Mammary epithelial cell (primary cell): ENCODE measurements at regions of chr1 and their contacts with region 1.

Region 1: GRCh38 chr1:37807555-37808368 is at the starts of genes C1orf122 and YRDC:
- DNase-seq: peak; percentile 90
- H3K4me3 ChIP-seq: peak within 1 kb of the TSS; percentile 69 to 77 (median 70)
- H3K27ac ChIP-seq: peak within 1 kb of the TSS; percentile 60
- H3K4me1 ChIP-seq: peaks cover 16% of the 10 kb centered on the region
- H3K27me3 ChIP-seq: no peaks in the 10 kb centered on the region
- CTCF ChIP-seq: no peak
- total RNA-seq, gene C1orf122: 13.0 to 73.6 TPM
- total RNA-seq, gene YRDC: 18.0 to 27.7 TPM

Region 2: DNA sequence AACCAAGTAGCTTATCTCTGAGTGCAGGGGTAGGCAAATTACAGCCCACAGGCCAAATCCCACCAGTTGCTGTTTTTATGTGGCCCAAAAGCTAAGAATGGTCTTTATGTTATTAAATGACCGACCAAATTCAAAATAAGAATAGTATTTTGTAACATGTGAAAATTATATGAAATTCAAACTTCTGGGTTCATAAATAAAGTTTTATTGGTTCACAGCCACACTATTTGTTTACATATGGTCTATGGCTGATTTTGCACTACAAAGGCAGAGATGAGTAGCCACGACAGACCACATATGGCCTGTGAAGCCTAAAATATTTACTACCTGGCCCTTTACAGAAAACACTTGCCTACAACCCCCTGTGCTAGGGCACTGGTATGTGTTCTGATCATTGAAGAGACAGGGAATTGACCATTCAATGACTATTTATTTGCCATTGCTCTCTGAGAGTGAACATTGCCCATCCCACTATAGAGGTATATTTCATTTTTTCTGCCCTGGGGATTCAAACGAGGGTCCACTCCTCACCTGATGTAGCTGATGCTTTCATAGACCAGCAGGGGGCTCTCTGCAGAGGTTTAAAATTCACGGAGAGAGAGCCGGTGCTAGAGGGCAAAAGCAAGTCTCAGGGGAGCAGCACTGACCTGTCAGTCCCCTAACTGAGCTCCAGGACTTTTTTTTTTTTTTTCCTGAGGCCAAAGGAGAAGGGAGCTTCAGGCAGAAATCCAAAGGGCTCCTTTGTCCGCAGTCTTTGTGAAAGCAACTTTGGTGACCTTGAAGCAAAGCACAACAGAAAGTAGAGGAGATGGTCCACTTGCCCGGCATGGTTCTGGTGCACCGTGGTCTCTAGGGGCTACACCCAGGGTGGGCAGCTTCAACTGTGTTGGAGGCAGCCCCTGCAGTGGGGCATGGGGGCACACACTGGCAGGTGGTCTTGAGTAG is 204.7 kb before region 1 on chr1:
- CTCF ChIA-PET with region 1: interaction called, 18 read pairs
- dilution Hi-C with region 1: no loop called
- in situ Hi-C with region 1: no loop called
- intact Hi-C with region 1: no loop called
- DNase-seq: no peak
- H3K4me3 ChIP-seq: no peak overlapping the region
- H3K27ac ChIP-seq: no peak overlapping the region
- H3K4me1 ChIP-seq: no peaks in the 10 kb centered on the region
- H3K27me3 ChIP-seq: peaks cover 3% of the 10 kb centered on the region
- CTCF ChIP-seq: peak; percentile 61 to 74

Region 3: DNA sequence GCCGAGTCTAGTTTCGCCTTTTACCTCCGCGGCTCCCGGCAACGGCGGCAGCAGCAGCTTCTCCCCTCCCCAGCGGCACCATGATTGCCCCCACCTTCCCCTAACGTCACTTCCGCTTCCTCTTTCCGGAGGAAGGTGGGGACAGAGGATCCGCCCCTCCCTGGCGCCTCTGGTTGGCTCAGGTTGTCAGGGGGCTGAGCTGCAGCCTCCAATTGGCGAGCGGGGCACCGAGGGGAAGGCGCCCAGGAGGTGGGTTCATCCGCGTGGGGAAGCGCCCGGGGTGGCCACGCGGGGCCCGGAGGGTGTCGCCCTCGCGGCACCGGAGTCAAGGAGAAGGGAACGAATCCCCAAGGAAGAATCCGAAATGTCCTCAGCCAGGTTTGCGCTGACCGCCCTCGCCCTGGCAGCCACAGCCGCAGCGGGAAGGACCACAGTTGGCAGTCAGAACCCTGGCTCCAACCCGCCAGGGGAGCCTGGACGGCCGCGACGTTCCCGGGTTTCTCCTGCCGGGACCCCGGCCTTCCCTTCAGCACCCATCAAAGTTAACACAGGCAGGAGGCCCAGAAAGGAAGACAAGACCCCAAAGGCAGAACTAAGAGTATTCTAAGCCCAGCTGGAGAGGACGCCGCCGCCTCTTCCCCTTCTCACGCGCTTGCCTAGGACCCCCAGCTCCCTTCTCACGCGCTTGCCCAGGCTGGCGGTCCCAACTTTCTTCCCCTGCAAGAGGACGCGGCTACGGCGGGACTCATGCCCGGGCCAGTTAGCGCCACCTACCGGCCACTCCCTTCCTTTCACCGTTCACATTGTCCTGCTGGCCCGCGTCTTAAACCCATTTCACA is 52.0 kb after region 1 on chr1 and contains the start of gene MTF1:
- CTCF ChIA-PET with region 1: no interaction called
- dilution Hi-C with region 1: loop called (anchors 5 kb)
- in situ Hi-C with region 1: no loop called
- intact Hi-C with region 1: loop called (anchors 1 kb)
- DNase-seq: peak; percentile 97
- H3K4me3 ChIP-seq: peak within 1 kb of the TSS; percentile 69 to 83 (median 78)
- H3K27ac ChIP-seq: peak within 1 kb of the TSS; percentile 89
- H3K4me1 ChIP-seq: peaks cover 29% of the 10 kb centered on the region
- H3K27me3 ChIP-seq: no peaks in the 10 kb centered on the region
- CTCF ChIP-seq: peak; percentile 62 to 93
- total RNA-seq, gene MTF1: 4.5 to 28.7 TPM

Region 4: GRCh38 chr1:37995751-37996345 is 188.1 kb after region 1 on chr1:
- CTCF ChIA-PET with region 1: no interaction called
- dilution Hi-C with region 1: no loop called
- in situ Hi-C with region 1: no loop called
- intact Hi-C with region 1: loop called (anchors 10 kb)
- DNase-seq: no peak
- H3K4me3 ChIP-seq: peak overlapping the region; percentile 36 to 55 (median 51)
- H3K27ac ChIP-seq: peak overlapping the region; percentile 54
- H3K4me1 ChIP-seq: peaks cover 41% of the 10 kb centered on the region
- H3K27me3 ChIP-seq: no peaks in the 10 kb centered on the region
- CTCF ChIP-seq: no peak